ENCODE measurements at regions of chr1 and their contacts with region 1.

Region 1: GRCh38 chr1:219812491-219813203 is 115.7 kb downstream of the SLC30A10 start:
- ATAC-seq: peak; percentile 74 to 98 (median 95)
- H3K4me3 ChIP-seq: no peak overlapping the region
- H3K27ac ChIP-seq: no peak overlapping the region
- H3K4me1 ChIP-seq: peaks cover 4 to 10% of the 10 kb centered on the region in 2 donors

Region 2: GRCh38 chr1:218323568-218324225 is 1489.0 kb before region 1 on chr1:
- in situ Hi-C with region 1: loop called in 7 of 9 experiments (anchors 10 to 25 kb)
- ATAC-seq: no peak
- H3K4me3 ChIP-seq: no peak overlapping the region
- H3K27ac ChIP-seq: no peak overlapping the region
- H3K4me1 ChIP-seq: no peaks in the 10 kb centered on the region

Region 3: GRCh38 chr1:219220945-219221344 is 591.7 kb before region 1 on chr1:
- in situ Hi-C with region 1: loop called in 1 of 9 experiments (anchors 25 kb)
- ATAC-seq: peak in 2 of 8 experiments; percentile 21 to 39
- H3K4me3 ChIP-seq: no peak overlapping the region
- H3K27ac ChIP-seq: no peak overlapping the region
- H3K4me1 ChIP-seq: no peaks in the 10 kb centered on the region

Region 4: DNA sequence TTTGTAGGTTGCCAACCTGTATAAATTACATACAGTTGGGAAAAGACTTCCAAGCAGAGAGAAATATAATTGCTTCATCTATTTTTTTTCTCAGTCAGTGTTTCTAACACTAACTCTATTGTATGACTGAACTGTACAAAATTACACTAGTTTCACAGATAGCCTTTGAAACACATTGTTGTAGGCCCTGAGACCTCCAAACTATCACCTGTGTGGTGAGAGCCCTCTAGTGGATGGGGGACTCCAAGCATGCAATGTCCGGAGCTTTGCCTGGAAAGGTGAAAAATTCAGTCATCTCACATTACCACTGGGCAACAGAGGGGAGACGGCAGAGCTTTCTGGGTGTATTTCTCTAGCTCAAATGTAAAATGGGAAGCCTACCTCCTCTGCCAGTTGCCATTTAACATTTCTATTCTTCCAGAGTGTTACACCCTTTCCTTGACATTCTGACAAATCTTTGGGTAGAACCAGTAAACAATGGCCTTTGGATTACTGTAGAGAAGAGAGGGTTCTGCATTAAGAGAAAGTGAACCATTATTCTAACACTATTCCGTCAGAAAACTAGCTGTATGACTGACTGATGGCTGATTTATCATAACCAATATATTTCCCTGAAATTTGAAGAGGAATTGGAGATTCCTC is 426.7 kb before region 1 on chr1:
- in situ Hi-C with region 1: loop called in 1 of 9 experiments (anchors 25 kb)
- ATAC-seq: peak in 4 of 8 experiments; percentile 42 to 91 (median 79)
- H3K4me3 ChIP-seq: no peak overlapping the region
- H3K27ac ChIP-seq: no peak overlapping the region
- H3K4me1 ChIP-seq: no peaks in the 10 kb centered on the region

Region 5: GRCh38 chr1:219566951-219567947 is 245.4 kb before region 1 on chr1:
- in situ Hi-C with region 1: loop called in 2 of 9 experiments (anchors 25 kb)
- ATAC-seq: peak in 6 of 8 experiments; percentile 36 to 76 (median 55)
- H3K4me3 ChIP-seq: no peak overlapping the region
- H3K27ac ChIP-seq: no peak overlapping the region
- H3K4me1 ChIP-seq: peaks cover 2 to 4% of the 10 kb centered on the region in 2 donors

Region 6: GRCh38 chr1:220454155-220454777 is 641.6 kb after region 1 on chr1:
- in situ Hi-C with region 1: no loop called
- ATAC-seq: no peak
- H3K4me3 ChIP-seq: no peak overlapping the region
- H3K27ac ChIP-seq: no peak overlapping the region
- H3K4me1 ChIP-seq: peaks cover 0 to 3% of the 10 kb centered on the region in 2 donors